ENCODE measurements at regions of chr4 and their contacts with region 1.

Region 1: GRCh38 chr4:107719922-107720722 is at the start of gene PAPSS1:
- DNase-seq: peak; percentile 91 to 96 (median 94)
- ATAC-seq: peak; percentile 94
- H3K4me3 ChIP-seq: peak within 1 kb of the TSS; percentile 88
- H3K4me3 Mint-ChIP-seq: peak within 1 kb of the TSS; percentile 92 to 99 (median 96)
- H3K27ac ChIP-seq: peak within 1 kb of the TSS; percentile 78
- H3K27ac Mint-ChIP-seq: peak within 1 kb of the TSS; percentile 93 to 99 (median 95)
- H3K4me1 ChIP-seq: peaks cover 4 to 12% of the 10 kb centered on the region in 2 donors
- H3K4me1 Mint-ChIP-seq: peaks cover 19 to 38% (median 32%) of the 10 kb centered on the region in 7 donors
- H3K27me3 ChIP-seq: no peaks in the 10 kb centered on the region
- H3K27me3 Mint-ChIP-seq: no peaks in the 10 kb centered on the region
- total RNA-seq, gene PAPSS1: 7.8 to 30.0 (median 16.1) TPM

Region 2: DNA sequence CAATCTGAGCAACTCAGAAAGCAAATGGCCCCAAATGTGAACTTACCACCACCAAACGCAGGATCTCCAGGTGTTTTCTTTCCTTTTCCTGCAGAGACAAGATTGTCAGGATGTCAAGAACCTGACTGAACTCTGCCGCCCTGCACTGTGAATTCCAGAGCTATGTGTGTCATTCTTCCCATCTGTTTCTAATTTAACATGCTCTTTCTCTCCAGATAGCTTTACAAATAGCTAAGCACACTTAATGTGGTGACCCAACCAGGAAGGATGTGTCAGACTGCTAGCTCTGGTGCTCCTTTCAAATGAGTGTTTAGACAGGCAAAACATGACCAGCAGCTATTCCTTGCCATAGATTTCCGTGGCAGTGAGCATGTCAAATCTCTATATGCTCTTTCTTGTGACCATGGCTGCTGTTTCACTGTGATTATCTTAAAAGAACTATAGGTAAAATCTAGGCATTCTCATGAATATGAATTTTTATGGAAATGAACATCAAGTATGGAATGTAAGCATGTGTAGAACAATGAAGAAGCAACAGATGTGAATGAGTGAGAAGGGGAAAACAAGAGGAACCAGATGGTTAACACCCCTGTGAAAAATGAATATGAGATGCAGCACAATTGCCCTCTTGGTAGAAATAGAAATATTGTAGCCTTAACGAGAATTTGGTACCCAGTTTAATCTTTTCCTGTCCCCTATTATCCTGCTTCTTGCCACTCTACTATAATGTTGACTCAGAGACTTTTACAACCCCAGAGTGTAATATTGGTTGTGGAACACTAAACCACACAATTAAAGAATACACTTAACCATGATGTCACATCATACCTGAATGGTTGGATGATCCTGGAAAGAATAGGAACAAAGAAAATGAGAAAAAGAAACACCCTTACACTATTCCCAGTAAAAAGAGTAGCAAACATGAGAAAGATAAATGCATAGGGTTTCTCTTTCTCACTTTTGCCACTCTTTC is 436.2 kb before region 1 on chr4:
- CTCF ChIA-PET with region 1: no interaction called
- POLR2A ChIA-PET with region 1: no interaction called
- intact Hi-C with region 1: no loop called
- DNase-seq: no peak
- ATAC-seq: no peak
- H3K4me3 ChIP-seq: no peak overlapping the region
- H3K4me3 Mint-ChIP-seq: no peak overlapping the region
- H3K27ac ChIP-seq: no peak overlapping the region
- H3K27ac Mint-ChIP-seq: no peak overlapping the region
- H3K4me1 ChIP-seq: no peaks in the 10 kb centered on the region
- H3K4me1 Mint-ChIP-seq: peaks cover 0 to 1% (median 0%) of the 10 kb centered on the region in 7 donors
- H3K27me3 ChIP-seq: no peaks in the 10 kb centered on the region
- H3K27me3 Mint-ChIP-seq: peaks cover 0 to 7% (median 4%) of the 10 kb centered on the region in 5 donors

Region 3: GRCh38 chr4:107736924-107737448 is 16.9 kb after region 1 on chr4:
- CTCF ChIA-PET with region 1: interaction called, 5 read pairs
- POLR2A ChIA-PET with region 1: interaction called, 6 read pairs
- intact Hi-C with region 1: loop called in 1 of 2 experiments (anchors 1 kb)
- DNase-seq: peak in 7 of 9 donors; percentile 14 to 45 (median 33)
- ATAC-seq: peak; percentile 74
- H3K4me3 ChIP-seq: no peak overlapping the region
- H3K4me3 Mint-ChIP-seq: no peak overlapping the region
- H3K27ac ChIP-seq: no peak overlapping the region
- H3K27ac Mint-ChIP-seq: no peak overlapping the region
- H3K4me1 ChIP-seq: no peaks in the 10 kb centered on the region
- H3K4me1 Mint-ChIP-seq: no peaks in the 10 kb centered on the region
- H3K27me3 ChIP-seq: no peaks in the 10 kb centered on the region
- H3K27me3 Mint-ChIP-seq: peaks cover 0 to 6% (median 0%) of the 10 kb centered on the region in 5 donors

Region 4: GRCh38 chr4:107989537-107990386 is 269.6 kb after region 1 on chr4 and contains the start of gene HADH:
- CTCF ChIA-PET with region 1: no interaction called
- POLR2A ChIA-PET with region 1: interaction called, 3 read pairs
- intact Hi-C with region 1: loop called (anchors 1 kb)
- DNase-seq: peak; percentile 92 to 98 (median 96)
- ATAC-seq: peak; percentile 100
- H3K4me3 ChIP-seq: peak within 1 kb of the TSS; percentile 57
- H3K4me3 Mint-ChIP-seq: peak within 1 kb of the TSS; percentile 86 to 99 (median 95)
- H3K27ac ChIP-seq: peak within 1 kb of the TSS; percentile 87
- H3K27ac Mint-ChIP-seq: peak within 1 kb of the TSS; percentile 79 to 98 (median 95)
- H3K4me1 ChIP-seq: peaks cover 8 to 37% of the 10 kb centered on the region in 2 donors
- H3K4me1 Mint-ChIP-seq: peaks cover 28 to 85% (median 71%) of the 10 kb centered on the region in 7 donors
- H3K27me3 ChIP-seq: no peaks in the 10 kb centered on the region
- H3K27me3 Mint-ChIP-seq: no peaks in the 10 kb centered on the region
- total RNA-seq, gene HADH: 16.5 to 38.8 (median 29.7) TPM

Region 5: GRCh38 chr4:108384544-108384943 is 664.4 kb after region 1 on chr4:
- CTCF ChIA-PET with region 1: no interaction called
- POLR2A ChIA-PET with region 1: no interaction called
- intact Hi-C with region 1: no loop called
- DNase-seq: no peak
- ATAC-seq: no peak
- H3K4me3 ChIP-seq: no peak overlapping the region
- H3K4me3 Mint-ChIP-seq: no peak overlapping the region
- H3K27ac ChIP-seq: no peak overlapping the region
- H3K27ac Mint-ChIP-seq: peak overlapping the region in 1 of 9 donors; percentile 35
- H3K4me1 ChIP-seq: no peaks in the 10 kb centered on the region
- H3K4me1 Mint-ChIP-seq: peaks cover 0 to 26% (median 17%) of the 10 kb centered on the region in 7 donors
- H3K27me3 ChIP-seq: no peaks in the 10 kb centered on the region
- H3K27me3 Mint-ChIP-seq: peaks cover 0 to 42% (median 0%) of the 10 kb centered on the region in 5 donors

Region 6: DNA sequence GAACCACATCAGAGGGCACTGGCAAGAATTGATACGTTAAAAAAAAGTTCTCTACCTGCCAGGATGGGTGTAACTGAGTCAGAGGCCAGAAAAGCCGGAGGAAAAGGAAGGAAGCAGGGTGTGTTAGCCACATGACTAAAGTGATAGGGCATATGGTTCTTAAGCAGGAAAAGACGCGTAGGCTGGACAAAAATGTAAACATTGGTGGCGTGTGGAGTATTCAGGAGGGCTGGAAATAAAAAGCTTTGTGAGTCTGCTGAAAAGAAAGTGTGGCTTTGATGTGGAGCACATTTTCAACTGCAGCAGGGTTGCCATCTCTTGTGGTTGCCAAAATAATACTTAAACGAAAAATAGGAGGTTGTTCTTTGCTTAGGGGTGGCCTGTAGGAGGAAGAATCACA is 713.7 kb after region 1 on chr4:
- CTCF ChIA-PET with region 1: no interaction called
- POLR2A ChIA-PET with region 1: no interaction called
- intact Hi-C with region 1: loop called in 1 of 2 experiments (anchors 2 kb)
- DNase-seq: peak in 8 of 9 donors; percentile 48 to 83 (median 72)
- ATAC-seq: peak; percentile 81
- H3K4me3 ChIP-seq: peak overlapping the region; percentile 55
- H3K4me3 Mint-ChIP-seq: peak overlapping the region; percentile 14 to 78 (median 66)
- H3K27ac ChIP-seq: peak overlapping the region; percentile 21
- H3K27ac Mint-ChIP-seq: peak overlapping the region; percentile 70 to 92 (median 86)
- H3K4me1 ChIP-seq: peaks cover 18 to 35% of the 10 kb centered on the region in 2 donors
- H3K4me1 Mint-ChIP-seq: peaks cover 26 to 86% (median 64%) of the 10 kb centered on the region in 7 donors
- H3K27me3 ChIP-seq: no peaks in the 10 kb centered on the region
- H3K27me3 Mint-ChIP-seq: peaks cover 0 to 2% (median 0%) of the 10 kb centered on the region in 5 donors

Region 7: DNA sequence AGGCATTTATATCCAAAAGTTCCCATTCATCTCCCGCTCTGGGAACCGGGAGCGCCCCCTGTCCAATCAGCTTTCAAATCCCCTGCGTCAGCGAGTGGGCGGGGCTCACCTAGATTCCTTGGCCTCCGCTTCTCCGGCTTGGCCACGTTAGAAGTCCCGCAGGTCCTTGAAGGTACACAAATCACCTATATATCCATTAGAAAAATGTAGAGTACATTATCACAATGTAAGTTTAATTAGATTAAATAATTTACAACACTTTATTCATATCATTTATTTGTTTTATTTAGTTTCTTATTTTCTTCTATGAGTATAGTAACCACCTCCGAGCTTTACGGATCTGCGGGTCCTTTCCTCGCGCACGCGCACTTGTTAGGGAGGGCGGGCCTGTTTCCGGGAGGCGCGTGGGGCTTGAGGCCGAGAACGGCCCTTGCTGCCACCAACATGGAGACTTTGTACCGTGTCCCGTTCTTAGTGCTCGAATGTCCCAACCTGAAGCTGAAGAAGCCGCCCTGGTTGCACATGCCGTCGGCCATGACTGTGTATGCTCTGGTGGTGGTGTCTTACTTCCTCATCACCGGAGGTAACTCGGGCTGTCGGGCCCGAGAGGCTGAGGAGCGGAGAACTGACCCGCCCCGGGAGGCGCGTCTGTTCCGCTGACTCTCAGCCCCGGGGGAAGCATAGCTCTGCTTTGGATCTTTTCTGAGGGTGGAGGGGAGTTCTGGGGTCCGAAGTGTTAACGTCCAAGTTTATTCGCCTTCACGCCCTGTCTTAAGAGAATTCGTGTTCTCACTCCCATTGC is 930.3 kb after region 1 on chr4 and contains the start of gene OSTC:
- CTCF ChIA-PET with region 1: no interaction called
- POLR2A ChIA-PET with region 1: no interaction called
- intact Hi-C with region 1: loop called in 1 of 2 experiments (anchors 1 kb)
- DNase-seq: peak; percentile 88 to 95 (median 91)
- ATAC-seq: peak; percentile 94
- H3K4me3 ChIP-seq: peak within 1 kb of the TSS; percentile 98
- H3K4me3 Mint-ChIP-seq: peak within 1 kb of the TSS; percentile 90 to 99 (median 94)
- H3K27ac ChIP-seq: peak within 1 kb of the TSS; percentile 96
- H3K27ac Mint-ChIP-seq: peak within 1 kb of the TSS; percentile 89 to 99 (median 98)
- H3K4me1 ChIP-seq: peaks cover 8 to 13% of the 10 kb centered on the region in 2 donors
- H3K4me1 Mint-ChIP-seq: peaks cover 22 to 49% (median 41%) of the 10 kb centered on the region in 7 donors
- H3K27me3 ChIP-seq: no peaks in the 10 kb centered on the region
- H3K27me3 Mint-ChIP-seq: no peaks in the 10 kb centered on the region
- total RNA-seq, gene OSTC: 31.8 to 98.2 (median 55.6) TPM

Region 8: GRCh38 chr4:109433205-109434006 is 1713.3 kb after region 1 on chr4 and contains the start of gene SEC24B:
- CTCF ChIA-PET with region 1: no interaction called
- POLR2A ChIA-PET with region 1: no interaction called
- intact Hi-C with region 1: loop called (anchors 1 to 5 kb)
- DNase-seq: peak; percentile 84 to 91 (median 90)
- ATAC-seq: peak; percentile 95
- H3K4me3 ChIP-seq: peak within 1 kb of the TSS; percentile 74
- H3K4me3 Mint-ChIP-seq: peak within 1 kb of the TSS; percentile 83 to 94 (median 88)
- H3K27ac ChIP-seq: peak within 1 kb of the TSS; percentile 93
- H3K27ac Mint-ChIP-seq: peak within 1 kb of the TSS; percentile 75 to 95 (median 93)
- H3K4me1 ChIP-seq: peaks cover 11 to 19% of the 10 kb centered on the region in 2 donors
- H3K4me1 Mint-ChIP-seq: peaks cover 29 to 61% (median 54%) of the 10 kb centered on the region in 7 donors
- H3K27me3 ChIP-seq: no peaks in the 10 kb centered on the region
- H3K27me3 Mint-ChIP-seq: no peaks in the 10 kb centered on the region
- total RNA-seq, gene SEC24B: 29.2 to 41.8 (median 35.2) TPM

Region 9: DNA sequence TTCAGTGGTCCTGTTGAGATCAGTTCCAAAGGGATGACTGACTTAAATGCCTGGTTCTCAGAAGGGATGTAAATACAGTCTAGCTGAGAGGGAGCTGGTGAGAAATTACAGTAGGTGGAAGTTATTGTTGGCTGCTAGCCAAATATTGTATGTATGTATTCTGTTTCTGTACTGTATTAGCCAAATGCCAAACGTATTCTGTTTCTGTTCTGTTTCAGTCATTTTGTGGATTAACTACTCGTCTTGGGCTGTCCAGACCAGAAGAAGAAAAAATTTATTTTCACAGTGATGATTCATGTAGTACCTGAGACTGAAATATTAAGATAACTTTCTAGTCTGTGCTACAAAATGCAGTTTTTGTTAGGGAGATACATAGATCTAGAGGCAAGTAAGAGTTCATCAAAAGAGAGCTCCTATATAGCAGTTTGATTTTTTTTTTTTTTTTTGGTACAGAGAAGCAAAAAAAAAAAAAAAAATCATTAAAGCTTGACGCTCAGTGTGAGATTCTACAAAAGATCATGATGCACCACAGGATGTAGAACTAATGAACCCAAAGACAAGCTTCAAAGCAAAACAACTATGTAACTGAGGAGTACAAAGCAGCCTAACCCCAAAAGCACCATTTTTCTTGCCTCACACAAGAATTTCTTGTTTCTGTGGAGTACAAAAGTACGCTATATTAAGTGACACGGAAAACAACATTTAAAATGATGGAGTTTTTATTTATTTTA is 1928.3 kb after region 1 on chr4:
- CTCF ChIA-PET with region 1: no interaction called
- POLR2A ChIA-PET with region 1: no interaction called
- intact Hi-C with region 1: loop called in 1 of 2 experiments (anchors 2 kb)
- DNase-seq: peak in 7 of 9 donors; percentile 69 to 91 (median 84)
- ATAC-seq: peak; percentile 96
- H3K4me3 ChIP-seq: peak overlapping the region; percentile 41
- H3K4me3 Mint-ChIP-seq: peak overlapping the region in 8 of 10 donors; percentile 59 to 88 (median 82)
- H3K27ac ChIP-seq: peak overlapping the region; percentile 81
- H3K27ac Mint-ChIP-seq: peak overlapping the region in 5 of 9 donors; percentile 92 to 100 (median 97)
- H3K4me1 ChIP-seq: peaks cover 68 to 70% of the 10 kb centered on the region in 2 donors
- H3K4me1 Mint-ChIP-seq: peaks cover 21 to 43% (median 34%) of the 10 kb centered on the region in 7 donors
- H3K27me3 ChIP-seq: no peaks in the 10 kb centered on the region
- H3K27me3 Mint-ChIP-seq: no peaks in the 10 kb centered on the region